ENCODE measurements at regions of chr10 and their contacts with region 1.

Region 1: DNA sequence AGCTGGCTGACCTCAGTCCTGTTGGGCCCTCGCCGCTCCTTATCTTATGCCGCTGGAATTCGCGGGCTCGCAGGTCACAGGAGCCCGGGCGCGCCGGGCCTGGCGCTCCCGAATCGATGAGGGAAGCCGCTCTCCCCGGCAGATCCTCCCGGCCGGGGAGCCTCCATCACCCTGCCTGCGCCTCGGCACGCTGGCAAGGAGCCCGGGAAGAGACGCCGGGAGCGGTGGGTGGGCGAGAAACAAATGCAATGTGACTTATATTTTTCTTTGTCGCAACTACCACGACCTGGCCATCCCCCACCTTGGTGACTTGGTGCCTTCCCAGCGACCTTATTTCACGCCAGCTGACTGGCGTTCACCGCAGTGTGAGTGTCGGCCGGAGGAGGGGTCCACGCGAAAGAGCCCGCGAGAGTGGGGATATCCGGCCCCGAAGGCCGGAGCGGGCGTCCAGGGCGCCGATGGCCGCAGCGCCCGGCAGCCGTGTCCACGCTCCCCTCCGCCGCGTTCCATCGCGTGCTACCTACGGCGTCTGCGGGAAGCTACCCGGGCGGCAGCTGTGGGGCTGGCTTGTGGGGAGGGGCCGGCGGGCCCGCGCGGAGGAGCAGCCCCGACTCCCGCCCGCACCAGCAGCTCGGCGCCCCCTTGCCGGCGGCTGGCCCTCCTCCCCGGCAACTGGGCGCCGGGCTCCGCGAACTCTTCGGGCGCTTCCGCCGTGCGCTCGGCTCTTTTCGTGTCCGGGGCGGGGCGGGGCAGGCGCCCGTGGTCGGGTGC is 494 bp upstream of the BMPR1A start:
- DNase-seq: peak; percentile 73 to 90 (median 88)
- ATAC-seq: peak; percentile 81
- H3K4me3 ChIP-seq: peak overlapping the region; percentile 73
- H3K27ac ChIP-seq: peak overlapping the region; percentile 90
- H3K4me1 ChIP-seq: peaks cover 34% of the 10 kb centered on the region in 2 experiments
- H3K27me3 ChIP-seq: no peaks in the 10 kb centered on the region
- CTCF ChIP-seq: 0 out of 6 replicates have a peak, but pooled peaks of 1 of the 3 experiments have one; percentile 1
- EP300 ChIP-seq: peak; percentile 57
- POLR2A ChIP-seq: peak; percentile 78
- RAD21 ChIP-seq: 0 out of 4 replicates have a peak, but pooled peaks of 1 of the 2 experiments have one; percentile 3

Region 2: GRCh38 chr10:86710987-86711512 is 44.9 kb before region 1 on chr10:
- CTCF ChIA-PET with region 1: interaction called, 4 read pairs
- POLR2A ChIA-PET with region 1: interaction called, 4 read pairs
- in situ Hi-C with region 1: no loop called
- intact Hi-C with region 1: loop called (anchors 2 kb)
- DNase-seq: peak; percentile 86 to 88 (median 86)
- ATAC-seq: peak; percentile 97
- H3K4me3 ChIP-seq: peak overlapping the region; percentile 60
- H3K27ac ChIP-seq: peak overlapping the region; percentile 90
- H3K4me1 ChIP-seq: peaks cover 0 to 32% of the 10 kb centered on the region in 2 experiments; a peak in 4 of 5 replicates
- H3K27me3 ChIP-seq: no peaks in the 10 kb centered on the region
- CTCF ChIP-seq: peak; percentile 76 to 98 (median 89)
- EP300 ChIP-seq: no peak
- POLR2A ChIP-seq: peak; percentile 72
- RAD21 ChIP-seq: peak; percentile 90 to 91

Region 3: DNA sequence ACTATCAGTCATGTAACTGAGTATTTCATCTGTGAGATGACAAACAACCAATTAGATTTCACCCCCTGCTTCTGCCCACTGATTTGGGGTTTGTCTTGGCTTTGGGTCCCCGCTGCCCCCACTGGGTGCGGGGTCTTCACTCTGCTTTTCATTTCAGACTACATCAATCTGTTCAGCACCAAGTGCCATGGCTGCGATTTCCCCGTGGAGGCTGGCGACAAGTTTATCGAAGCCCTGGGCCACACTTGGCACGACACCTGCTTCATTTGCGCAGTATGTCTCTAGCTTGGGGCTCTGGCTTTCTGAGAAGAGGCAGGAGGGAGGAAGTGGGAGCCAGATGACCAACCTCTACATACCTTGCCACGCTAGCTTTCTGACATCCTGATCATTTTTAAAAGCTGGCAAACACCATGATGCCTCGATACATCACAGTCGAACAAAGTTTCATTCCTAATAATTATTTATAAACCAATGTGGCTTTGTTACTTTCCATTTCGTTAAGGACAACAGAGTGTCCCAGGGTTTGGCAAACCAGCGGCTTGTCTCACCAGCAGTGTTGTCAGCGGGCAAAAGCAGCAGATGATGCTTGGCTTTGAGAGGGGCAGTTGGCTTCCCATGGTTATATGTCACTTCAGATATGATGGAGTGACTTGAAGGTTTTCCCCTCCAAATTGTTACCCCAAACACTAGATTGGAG is 29.8 kb before region 1 on chr10:
- CTCF ChIA-PET with region 1: no interaction called
- POLR2A ChIA-PET with region 1: no interaction called
- in situ Hi-C with region 1: no loop called
- intact Hi-C with region 1: no loop called
- DNase-seq: no peak
- ATAC-seq: no peak
- H3K4me3 ChIP-seq: no peak overlapping the region
- H3K27ac ChIP-seq: no peak overlapping the region
- H3K4me1 ChIP-seq: peaks cover 0 to 2% of the 10 kb centered on the region in 2 experiments; a peak in 3 of 5 replicates
- H3K27me3 ChIP-seq: no peaks in the 10 kb centered on the region
- CTCF ChIP-seq: no peak
- EP300 ChIP-seq: no peak
- POLR2A ChIP-seq: no peak
- RAD21 ChIP-seq: no peak

Region 4: GRCh38 chr10:86770417-86770960 is 14.6 kb after region 1 on chr10:
- CTCF ChIA-PET with region 1: no interaction called
- POLR2A ChIA-PET with region 1: interaction called, 40 read pairs
- in situ Hi-C with region 1: no loop called
- intact Hi-C with region 1: no loop called
- DNase-seq: peak; percentile 61 to 76 (median 68)
- ATAC-seq: peak; percentile 90
- H3K4me3 ChIP-seq: no peak overlapping the region
- H3K27ac ChIP-seq: no peak overlapping the region
- H3K4me1 ChIP-seq: peaks cover 13 to 23% of the 10 kb centered on the region in 2 experiments; a peak in 4 of 5 replicates
- H3K27me3 ChIP-seq: no peaks in the 10 kb centered on the region
- CTCF ChIP-seq: no peak
- EP300 ChIP-seq: no peak
- POLR2A ChIP-seq: no peak
- RAD21 ChIP-seq: no peak

Region 5: DNA sequence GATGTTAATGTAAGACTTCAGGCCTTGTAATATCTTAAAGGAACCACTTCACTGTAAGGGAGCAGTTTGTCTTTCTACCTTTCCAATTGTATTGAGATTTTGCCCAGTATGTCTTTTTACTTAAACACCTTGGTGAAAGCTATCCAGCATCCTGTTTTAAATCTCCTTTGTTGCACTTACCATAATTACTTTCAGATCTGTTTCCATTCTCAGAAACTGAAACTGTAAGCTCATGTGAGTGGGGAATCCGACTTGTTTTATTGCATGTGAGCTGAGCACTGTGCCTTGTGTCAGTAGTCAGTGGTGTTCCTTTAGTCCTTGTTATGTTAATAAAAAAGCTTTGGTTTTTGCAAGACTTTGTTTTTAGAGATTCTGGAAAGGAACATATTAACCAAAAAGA is 42.7 kb after region 1 on chr10:
- CTCF ChIA-PET with region 1: no interaction called
- POLR2A ChIA-PET with region 1: no interaction called
- in situ Hi-C with region 1: no loop called
- intact Hi-C with region 1: loop called (anchors 5 kb)
- DNase-seq: no peak
- ATAC-seq: no peak
- H3K4me3 ChIP-seq: no peak overlapping the region
- H3K27ac ChIP-seq: no peak overlapping the region; the same call in 2 of the 3 replicates
- H3K4me1 ChIP-seq: peaks cover 0 to 3% of the 10 kb centered on the region in 2 experiments; a peak in 3 of 5 replicates
- H3K27me3 ChIP-seq: no peaks in the 10 kb centered on the region
- CTCF ChIP-seq: no peak
- EP300 ChIP-seq: no peak
- POLR2A ChIP-seq: no peak
- RAD21 ChIP-seq: no peak

Region 6: DNA sequence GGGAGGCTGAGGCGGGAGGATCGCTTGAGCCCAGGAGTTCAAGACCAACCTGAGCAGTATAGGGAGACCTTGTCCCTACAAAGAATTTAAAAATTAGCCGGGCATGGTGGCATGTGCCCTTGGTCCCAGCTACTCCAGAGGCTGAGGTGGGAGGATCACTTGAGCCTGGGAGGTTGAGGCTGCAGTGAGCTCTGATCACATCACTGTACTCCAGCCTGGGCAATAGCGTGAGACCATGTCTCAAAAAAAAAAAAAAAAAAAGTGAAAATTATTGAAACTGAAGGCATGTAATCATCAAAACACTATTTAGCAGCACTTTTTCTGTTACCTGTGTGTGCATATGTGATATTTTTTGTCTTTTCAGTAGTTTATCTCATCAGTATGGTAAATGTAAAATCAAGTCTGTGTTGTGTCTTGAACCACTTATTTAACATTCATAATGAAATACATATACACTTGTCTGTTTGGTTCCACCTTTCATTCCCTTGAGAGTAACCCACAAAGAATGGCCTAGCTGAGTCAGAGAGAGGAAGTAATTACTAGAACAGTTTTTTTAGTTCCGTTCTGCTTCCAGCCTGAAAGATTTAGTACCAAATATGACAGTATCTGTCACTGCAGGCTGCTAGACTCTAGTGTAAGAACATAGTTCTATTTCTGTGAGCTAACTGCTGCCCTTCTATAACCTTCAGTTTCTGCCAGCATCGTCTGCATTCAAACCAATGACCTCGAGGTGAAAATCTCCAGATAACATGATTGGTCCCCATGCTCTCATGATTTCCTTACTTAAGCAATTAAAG is 132.9 kb after region 1 on chr10:
- CTCF ChIA-PET with region 1: no interaction called
- POLR2A ChIA-PET with region 1: interaction called, 4 read pairs
- in situ Hi-C with region 1: no loop called
- intact Hi-C with region 1: loop called (anchors 1 kb)
- DNase-seq: peak in 2 of 4 experiments; percentile 53 to 65
- ATAC-seq: peak; percentile 95
- H3K4me3 ChIP-seq: no peak overlapping the region
- H3K27ac ChIP-seq: peak overlapping the region; percentile 81
- H3K4me1 ChIP-seq: peaks cover 3 to 17% of the 10 kb centered on the region in 2 experiments; a peak in 4 of 5 replicates
- H3K27me3 ChIP-seq: no peaks in the 10 kb centered on the region
- CTCF ChIP-seq: no peak
- EP300 ChIP-seq: peak; percentile 86; the same call in 1 of the 2 replicates
- POLR2A ChIP-seq: no peak
- RAD21 ChIP-seq: no peak; a peak in 1 of 4 replicates

Region 7: DNA sequence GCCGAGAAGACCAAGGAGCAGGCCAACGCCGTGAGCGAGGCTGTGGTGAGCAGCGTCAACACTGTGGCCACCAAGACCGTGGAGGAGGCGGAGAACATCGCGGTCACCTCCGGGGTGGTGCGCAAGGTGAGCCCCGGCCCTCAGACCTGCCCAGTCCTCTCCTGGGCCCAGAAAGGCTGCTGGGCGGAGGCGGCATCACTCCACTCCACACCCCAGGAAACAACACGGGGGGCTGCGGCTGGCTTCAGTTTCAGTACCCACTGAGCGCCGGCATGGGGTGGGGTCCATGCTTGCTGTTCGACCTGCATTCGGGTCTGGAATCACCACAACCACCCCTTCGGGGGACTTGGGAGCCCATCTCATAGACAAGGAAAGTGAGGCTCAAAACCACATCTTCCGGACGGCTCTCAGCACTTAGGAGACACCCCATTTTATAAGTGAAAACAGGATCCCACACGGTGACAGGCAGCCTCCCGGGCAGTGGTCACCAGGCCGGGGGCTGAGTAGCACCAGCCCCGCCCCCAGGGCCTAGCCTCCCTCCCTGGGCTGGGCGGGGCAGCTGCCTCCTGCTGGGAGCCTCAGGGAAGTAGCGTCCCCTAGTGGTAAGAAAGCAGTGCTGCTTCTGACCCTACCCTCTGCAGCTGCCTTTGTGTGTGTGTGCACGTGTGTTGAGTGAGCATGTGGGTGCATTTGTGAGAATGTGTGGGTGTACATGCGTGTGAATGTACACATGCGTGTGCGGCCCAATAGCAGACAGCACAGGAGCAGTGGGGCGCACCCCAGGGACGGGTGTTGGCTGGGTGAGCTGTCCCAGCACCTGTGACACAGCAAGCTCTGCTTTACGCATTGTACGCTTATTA is 204.3 kb after region 1 on chr10:
- CTCF ChIA-PET with region 1: no interaction called
- POLR2A ChIA-PET with region 1: no interaction called
- in situ Hi-C with region 1: no loop called
- intact Hi-C with region 1: no loop called
- DNase-seq: peak; percentile 85 to 92 (median 87)
- ATAC-seq: peak; percentile 80
- H3K4me3 ChIP-seq: peak overlapping the region; percentile 49
- H3K27ac ChIP-seq: peak overlapping the region; percentile 91
- H3K4me1 ChIP-seq: peaks cover 53 to 84% of the 10 kb centered on the region in 2 experiments
- H3K27me3 ChIP-seq: no peaks in the 10 kb centered on the region
- CTCF ChIP-seq: peak; percentile 97 to 98 (median 97)
- EP300 ChIP-seq: 0 out of 2 replicates have a peak, but pooled peaks have one; percentile 5
- POLR2A ChIP-seq: peak; percentile 44; the same call in 1 of the 2 replicates
- RAD21 ChIP-seq: peak; percentile 87 to 97